Psoas muscle (tissue), 8 donors: ENCODE measurements at regions of chr22 and their contacts with region 1.

Region 1: GRCh38 chr22:20229916-20230775 is 38.0 kb downstream of the RTN4R start:
- DNase-seq: no peak
- ATAC-seq: no peak
- H3K4me3 ChIP-seq: no peak overlapping the region
- H3K27ac ChIP-seq: no peak overlapping the region
- H3K4me1 ChIP-seq: no peaks in the 10 kb centered on the region
- H3K27me3 ChIP-seq: peaks cover 0 to 3% (median 0%) of the 10 kb centered on the region in 3 donors
- CTCF ChIP-seq: no peak

Region 2: DNA sequence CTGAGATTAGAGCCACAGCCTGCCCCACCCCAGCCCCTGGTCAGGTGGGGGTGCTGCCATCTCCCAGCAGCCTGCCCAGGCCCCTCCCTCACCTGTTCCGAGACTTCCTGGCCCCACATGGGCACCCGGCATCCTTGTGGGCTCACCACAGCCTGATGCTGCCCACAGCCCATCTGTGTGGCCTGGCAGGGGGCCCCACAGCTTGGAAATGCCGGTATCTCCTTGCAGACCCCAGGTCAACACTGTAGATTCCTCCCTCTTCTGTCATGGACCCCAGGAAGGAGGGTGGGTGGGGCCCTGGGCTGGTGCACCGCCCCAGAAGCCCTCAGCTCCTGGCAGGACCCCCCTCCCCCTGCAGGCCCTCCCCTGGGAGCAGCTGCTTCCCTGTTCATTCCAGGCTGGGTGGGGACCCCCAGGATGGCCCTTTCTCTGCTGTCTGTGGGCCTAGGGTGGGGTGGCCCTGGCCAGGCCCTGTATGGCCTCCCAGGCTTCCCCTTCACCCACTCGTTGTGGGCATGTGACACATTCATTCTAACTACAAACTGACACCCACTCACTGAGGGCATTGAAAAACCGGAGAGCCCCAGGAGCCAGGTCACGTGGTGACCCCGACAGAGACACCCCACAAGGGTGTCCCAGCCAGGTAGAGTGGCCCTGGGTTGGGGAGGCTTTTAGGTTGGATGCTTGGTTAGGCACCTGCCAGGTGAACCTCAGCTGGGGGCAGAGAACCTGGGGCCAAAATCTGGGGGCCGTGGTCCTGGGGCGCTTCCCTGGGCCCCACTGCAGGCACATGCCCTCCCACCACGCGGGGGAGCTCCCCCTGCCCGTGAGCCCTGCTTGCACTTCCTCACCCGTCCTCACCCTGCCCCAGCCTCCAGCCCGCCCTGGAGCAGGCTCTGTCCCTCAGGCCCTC is 35.2 kb before region 1 on chr22:
- intact Hi-C with region 1: loop called in 1 of 2 experiments (anchors 5 kb)
- DNase-seq: no peak
- ATAC-seq: no peak
- H3K4me3 ChIP-seq: no peak overlapping the region
- H3K27ac ChIP-seq: no peak overlapping the region
- H3K4me1 ChIP-seq: no peaks in the 10 kb centered on the region
- H3K27me3 ChIP-seq: no peaks in the 10 kb centered on the region
- CTCF ChIP-seq: no peak